Uterus (tissue), 4 donors: ENCODE measurements at regions of chr7 and their contacts with region 1.

Region 1: DNA sequence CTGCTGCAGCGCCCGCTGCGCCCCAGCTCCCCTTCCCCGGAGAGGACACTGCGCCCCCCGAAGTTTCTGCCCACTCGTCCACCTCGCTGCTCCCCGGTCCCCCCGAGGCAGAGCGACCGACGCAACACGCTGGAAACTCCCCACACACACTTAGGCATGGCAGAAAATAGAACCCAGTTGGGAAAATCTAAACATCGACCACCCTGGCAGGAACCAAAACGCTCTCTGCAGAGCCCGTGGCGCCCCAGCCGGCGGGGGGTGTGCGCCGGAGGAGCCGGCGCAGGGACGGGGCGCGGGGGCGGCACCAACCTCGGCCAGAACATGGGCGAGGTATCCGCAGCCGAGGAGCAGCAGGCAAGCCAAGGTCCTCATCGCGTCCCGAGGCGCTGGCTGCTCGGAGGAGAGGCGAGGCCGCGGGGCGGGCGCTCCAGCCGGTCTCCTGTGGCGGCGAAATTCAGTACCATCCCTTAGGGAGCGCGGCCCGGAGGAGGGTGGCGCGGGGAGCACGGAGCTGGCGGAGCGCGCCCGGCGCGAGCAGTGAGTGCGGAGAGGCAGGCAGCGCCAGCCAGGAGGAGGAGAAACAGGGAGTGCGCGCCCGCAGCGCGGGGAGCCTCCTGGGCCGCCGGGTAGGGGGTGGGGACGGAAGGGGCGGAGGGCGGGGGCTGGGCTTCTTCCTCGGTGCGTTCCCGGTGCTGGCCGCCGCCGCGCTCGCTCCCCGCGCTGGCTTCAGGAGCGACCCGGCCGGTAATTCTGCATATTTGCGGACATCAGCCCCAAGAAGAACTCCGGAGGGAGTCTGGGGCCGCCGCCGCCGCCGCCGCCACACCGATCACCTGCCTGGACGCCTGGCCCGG is 789 bp downstream of the PDGFA start:
- DNase-seq: peak; percentile 77 to 79
- H3K4me3 ChIP-seq: peak overlapping the region; percentile 53 to 54
- H3K27ac ChIP-seq: peak overlapping the region; percentile 80 to 82
- H3K4me1 ChIP-seq: peaks cover 0 to 6% of the 10 kb centered on the region in 2 donors
- H3K27me3 ChIP-seq: peaks cover 0 to 7% of the 10 kb centered on the region in 2 donors
- CTCF ChIP-seq: peak in 2 of 4 experiments; percentile 5 to 17
- POLR2A ChIP-seq: peak; percentile 53 to 73

Region 2: DNA sequence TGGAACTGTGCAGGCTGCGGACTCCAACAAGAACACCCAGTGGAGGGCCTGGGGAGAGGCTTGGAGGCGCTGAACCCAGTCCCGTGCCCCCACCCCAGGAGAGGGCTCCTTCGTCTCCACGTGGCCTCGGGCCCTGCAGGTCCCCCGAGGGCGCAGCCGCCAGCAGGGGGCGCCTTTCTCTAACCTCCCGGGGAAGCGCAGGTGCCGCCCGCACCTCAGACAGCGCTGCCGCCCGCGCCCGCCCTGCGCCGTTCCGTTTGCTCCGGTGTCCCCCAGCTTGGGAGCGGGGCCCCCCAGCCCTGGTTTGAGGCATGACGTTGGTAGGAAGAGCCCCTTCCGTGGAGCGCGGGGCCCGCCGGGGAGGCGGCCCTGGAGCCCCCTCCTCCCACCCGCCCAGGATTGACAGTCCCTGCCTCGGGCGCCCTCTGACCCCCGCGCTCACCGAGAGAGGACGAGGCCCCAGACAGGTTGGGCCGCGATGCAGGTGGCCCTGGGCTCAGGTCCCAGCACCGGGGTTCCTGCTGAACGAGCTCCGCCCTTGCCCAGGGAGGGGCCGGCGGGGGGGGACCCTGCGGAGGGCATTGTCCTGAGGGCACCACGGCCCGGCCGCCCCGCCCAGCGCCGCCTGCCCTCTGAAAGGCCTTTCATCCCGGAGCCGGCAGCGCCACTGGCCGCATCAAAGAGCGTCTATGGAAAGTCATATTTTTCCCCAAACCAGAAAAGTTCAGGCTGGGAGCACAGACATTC is 186.0 kb before region 1 on chr7:
- intact Hi-C with region 1: loop called (anchors 10 kb)
- DNase-seq: peak; percentile 61 to 62
- H3K4me3 ChIP-seq: peak overlapping the region; percentile 1 to 18
- H3K27ac ChIP-seq: peak overlapping the region; percentile 18 to 46
- H3K4me1 ChIP-seq: peaks cover 0 to 11% of the 10 kb centered on the region in 2 donors
- H3K27me3 ChIP-seq: peaks cover 0 to 5% of the 10 kb centered on the region in 2 donors
- CTCF ChIP-seq: peak; percentile 69 to 77 (median 74)
- POLR2A ChIP-seq: no peak

Region 3: GRCh38 chr7:593324-594115 is 74.7 kb after region 1 on chr7:
- intact Hi-C with region 1: loop called (anchors 5 kb)
- DNase-seq: no peak
- H3K4me3 ChIP-seq: no peak overlapping the region
- H3K27ac ChIP-seq: no peak overlapping the region
- H3K4me1 ChIP-seq: peaks cover 0 to 11% of the 10 kb centered on the region in 2 donors
- H3K27me3 ChIP-seq: no peaks in the 10 kb centered on the region
- CTCF ChIP-seq: no peak
- POLR2A ChIP-seq: no peak